PC-9 (cell line): ENCODE measurements at regions of chr6 and their contacts with region 1.

Region 1: DNA sequence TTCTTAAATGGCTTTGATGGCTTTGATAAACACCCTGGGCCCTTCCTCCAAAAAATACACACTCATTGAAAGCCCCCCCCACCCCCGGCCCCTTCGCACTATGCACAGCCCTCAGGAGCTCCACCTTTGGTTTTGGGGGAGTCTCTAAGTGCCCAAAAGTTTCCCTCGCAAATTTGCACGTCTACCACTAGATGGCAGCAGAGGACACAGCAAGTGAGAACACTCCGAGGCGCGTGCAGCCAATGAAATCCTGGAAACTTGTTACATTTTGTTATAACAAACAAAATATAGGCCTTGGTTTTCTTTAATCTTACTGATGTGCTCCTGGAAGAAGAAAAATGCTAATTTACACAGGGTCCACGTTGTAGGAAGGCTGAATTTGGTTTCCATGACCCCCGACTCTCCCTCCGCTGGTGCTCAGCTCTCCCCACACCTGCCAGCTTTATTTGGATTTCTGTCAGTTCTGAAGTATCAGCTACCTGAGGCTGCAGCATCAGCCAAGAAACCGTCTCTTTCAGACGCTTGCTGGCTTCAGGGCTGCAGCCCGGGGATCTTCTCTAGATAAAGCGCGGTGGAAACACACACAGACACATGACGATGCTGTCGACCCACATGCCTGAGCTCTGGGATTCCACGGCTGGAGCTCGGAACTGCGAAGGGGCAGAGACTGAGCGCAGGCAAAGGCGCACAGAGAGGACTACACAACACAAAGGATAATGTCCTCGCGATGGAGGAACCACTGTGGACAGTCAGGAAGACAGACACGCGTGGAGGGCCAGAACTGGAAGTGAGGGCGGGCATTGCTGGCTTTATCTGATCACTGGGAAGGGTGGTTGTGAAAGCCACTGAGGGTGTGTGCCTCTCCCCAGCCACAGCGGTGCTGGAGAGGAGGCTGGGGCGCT is 148.4 kb upstream of the RPS6KA2 start:
- DNase-seq: peak; percentile 27 to 42
- H3K4me3 ChIP-seq: no peak overlapping the region
- H3K27ac ChIP-seq: no peak overlapping the region
- H3K4me1 ChIP-seq: no peaks in the 10 kb centered on the region
- H3K27me3 ChIP-seq: peaks cover 3% of the 10 kb centered on the region; the same call in 1 of the 2 replicates
- CTCF ChIP-seq: peak; percentile 87

Region 2: GRCh38 chr6:166419286-166419685 is 356.1 kb before region 1 on chr6:
- CTCF ChIA-PET with region 1: no interaction called
- POLR2A ChIA-PET with region 1: no interaction called
- intact Hi-C with region 1: no loop called
- DNase-seq: no peak
- H3K4me3 ChIP-seq: no peak overlapping the region
- H3K27ac ChIP-seq: no peak overlapping the region
- H3K4me1 ChIP-seq: no peaks in the 10 kb centered on the region
- H3K27me3 ChIP-seq: no peaks in the 10 kb centered on the region
- CTCF ChIP-seq: no peak

Region 3: DNA sequence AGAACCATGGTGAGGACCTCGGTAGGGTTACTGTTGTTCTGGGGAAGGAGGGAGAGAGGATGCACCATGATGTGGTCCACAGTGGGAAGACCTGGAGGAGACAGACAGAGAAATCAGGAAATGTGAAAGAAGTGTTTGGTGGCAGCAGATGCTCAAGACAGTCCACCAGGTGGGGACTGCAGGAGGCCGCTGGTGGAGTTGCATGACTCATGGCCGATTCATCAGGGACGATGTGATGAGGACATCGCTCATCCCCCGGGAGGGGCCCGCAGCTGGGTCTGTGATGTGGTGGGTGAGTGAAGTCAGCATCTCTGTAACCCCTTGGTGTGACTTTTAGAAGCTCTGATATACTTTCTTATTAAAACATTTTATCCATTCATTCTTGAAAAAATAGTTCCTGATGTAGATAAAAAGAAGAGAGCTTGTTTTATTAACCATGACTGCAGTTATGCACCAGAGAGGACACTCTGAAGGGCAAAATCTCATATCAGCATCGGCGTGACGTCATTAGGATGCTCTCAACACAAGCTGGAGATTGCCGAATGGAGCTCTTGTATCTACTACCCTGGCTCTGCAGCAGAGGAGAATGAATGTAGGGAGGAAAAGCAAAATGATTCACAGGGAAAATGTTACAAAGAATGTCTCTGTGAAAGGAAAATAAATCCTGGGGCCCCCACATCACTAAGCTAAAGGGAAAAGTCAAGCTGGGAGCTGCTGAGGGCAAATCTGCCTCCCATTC is 260.2 kb before region 1 on chr6:
- CTCF ChIA-PET with region 1: no interaction called
- POLR2A ChIA-PET with region 1: no interaction called
- intact Hi-C with region 1: loop called (anchors 10 kb)
- DNase-seq: peak; percentile 45 to 67
- H3K4me3 ChIP-seq: no peak overlapping the region
- H3K27ac ChIP-seq: no peak overlapping the region
- H3K4me1 ChIP-seq: no peaks in the 10 kb centered on the region
- H3K27me3 ChIP-seq: no peaks in the 10 kb centered on the region
- CTCF ChIP-seq: peak; percentile 55

Region 4: GRCh38 chr6:166757232-166758135 is 17.9 kb before region 1 on chr6:
- CTCF ChIA-PET with region 1: no interaction called
- POLR2A ChIA-PET with region 1: no interaction called
- intact Hi-C with region 1: no loop called
- DNase-seq: no peak
- H3K4me3 ChIP-seq: no peak overlapping the region
- H3K27ac ChIP-seq: no peak overlapping the region
- H3K4me1 ChIP-seq: no peaks in the 10 kb centered on the region
- H3K27me3 ChIP-seq: peaks cover 15% of the 10 kb centered on the region
- CTCF ChIP-seq: no peak

Region 5: GRCh38 chr6:166825553-166826145 is 50.2 kb after region 1 on chr6:
- CTCF ChIA-PET with region 1: no interaction called
- POLR2A ChIA-PET with region 1: no interaction called
- intact Hi-C with region 1: no loop called
- DNase-seq: peak; percentile 6 to 70
- H3K4me3 ChIP-seq: no peak overlapping the region
- H3K27ac ChIP-seq: no peak overlapping the region
- H3K4me1 ChIP-seq: no peaks in the 10 kb centered on the region
- H3K27me3 ChIP-seq: peaks cover 25% of the 10 kb centered on the region; the same call in 1 of the 2 replicates
- CTCF ChIP-seq: no peak

Region 6: DNA sequence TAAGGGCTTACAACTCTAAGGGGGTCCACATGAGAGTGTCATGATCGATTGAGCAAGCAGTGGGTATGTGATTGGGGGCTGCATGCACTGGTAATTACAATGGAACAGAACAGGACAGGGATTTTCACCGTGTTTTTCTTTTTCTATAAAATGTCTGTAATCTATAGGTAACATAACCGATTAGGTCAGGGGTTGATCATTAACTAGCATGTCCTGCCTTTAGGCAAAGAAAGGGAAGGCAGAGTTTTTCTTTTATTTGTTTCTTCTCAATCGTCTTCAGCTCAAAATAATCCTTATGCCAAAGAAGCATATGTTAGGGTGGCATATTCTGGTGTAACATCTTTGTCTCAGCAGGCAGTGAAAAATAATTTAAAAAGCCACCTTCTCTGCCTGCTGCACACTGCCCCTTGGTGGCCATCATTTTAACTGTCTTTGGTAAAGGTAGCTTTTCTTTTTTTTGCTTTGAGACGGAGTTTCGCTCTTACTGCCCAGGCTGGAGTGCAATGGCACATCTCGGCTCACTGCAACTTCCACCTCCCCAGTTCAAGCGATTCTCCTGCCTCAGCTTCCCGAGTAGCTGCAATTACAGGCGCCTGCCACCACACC is 214.1 kb after region 1 on chr6:
- CTCF ChIA-PET with region 1: interaction called, 4 read pairs
- POLR2A ChIA-PET with region 1: no interaction called
- intact Hi-C with region 1: loop called (anchors 1 kb)
- DNase-seq: no peak
- H3K4me3 ChIP-seq: no peak overlapping the region
- H3K27ac ChIP-seq: no peak overlapping the region
- H3K4me1 ChIP-seq: no peaks in the 10 kb centered on the region
- H3K27me3 ChIP-seq: no peaks in the 10 kb centered on the region
- CTCF ChIP-seq: peak; percentile 59

Region 7: GRCh38 chr6:167141667-167142432 is 366.4 kb after region 1 on chr6:
- CTCF ChIA-PET with region 1: no interaction called
- POLR2A ChIA-PET with region 1: no interaction called
- intact Hi-C with region 1: loop called (anchors 2 kb)
- DNase-seq: peak in 1 of 2 experiments; percentile 22
- H3K4me3 ChIP-seq: no peak overlapping the region
- H3K27ac ChIP-seq: no peak overlapping the region
- H3K4me1 ChIP-seq: no peaks in the 10 kb centered on the region
- H3K27me3 ChIP-seq: peaks cover 88% of the 10 kb centered on the region
- CTCF ChIP-seq: peak; percentile 70